Heart right ventricle (tissue), 16 donors: ENCODE measurements at regions of chr14 and their contacts with region 1.

Region 1: GRCh38 chr14:80047761-80048160 is 163.5 kb downstream of the DIO2 start:
- DNase-seq: no peak
- ATAC-seq: no peak
- H3K4me3 ChIP-seq: no peak overlapping the region
- H3K27ac ChIP-seq: no peak overlapping the region
- H3K4me1 ChIP-seq: no peaks in the 10 kb centered on the region
- H3K27me3 ChIP-seq: no peaks in the 10 kb centered on the region
- CTCF ChIP-seq: no peak

Region 2: DNA sequence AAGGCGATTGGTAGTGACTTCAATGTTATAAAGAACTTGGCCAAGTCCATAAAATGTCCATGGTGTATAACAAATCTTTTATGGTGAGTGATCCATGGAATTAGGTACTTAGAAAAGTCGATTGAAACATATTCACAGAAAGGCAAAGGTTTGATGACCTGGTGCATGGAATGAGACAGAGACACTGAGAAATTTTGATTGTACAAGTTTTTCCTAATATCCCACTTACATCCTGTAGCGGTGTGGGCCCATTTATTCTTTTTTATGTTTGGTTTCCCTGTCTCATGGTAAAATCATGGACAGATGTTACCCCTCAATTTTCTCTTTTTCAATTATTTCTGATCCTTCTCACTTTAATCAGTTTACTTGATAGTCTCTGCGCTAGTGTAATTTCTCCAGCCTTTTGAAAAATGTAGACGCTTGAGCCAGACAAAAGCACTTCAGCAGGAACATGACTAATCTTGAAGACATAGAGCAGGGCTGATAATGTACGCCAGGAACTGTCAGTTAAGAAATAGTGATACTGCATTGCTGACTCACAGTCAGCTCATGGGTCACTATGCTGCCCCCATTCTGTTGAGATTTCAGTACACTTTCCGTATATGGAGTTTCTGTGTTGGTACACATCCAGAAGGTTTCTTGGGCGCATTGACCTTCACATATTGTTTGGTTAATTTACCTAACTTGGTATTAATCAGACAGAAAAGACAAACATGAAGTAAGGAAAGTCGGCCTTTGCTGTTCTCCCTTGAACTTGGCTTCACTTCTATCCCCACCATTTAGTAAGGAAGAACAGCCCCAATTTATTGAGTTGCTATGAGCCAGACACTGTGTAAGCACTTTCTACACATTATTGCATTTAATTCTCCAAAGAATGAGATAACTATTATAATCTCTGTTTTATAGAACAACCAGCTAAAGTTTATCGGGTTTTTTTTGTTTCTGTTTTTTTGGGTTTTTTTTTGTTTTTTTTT is 678.1 kb before region 1 on chr14:
- intact Hi-C with region 1: loop called in 1 of 10 experiments (anchors 10 kb)
- DNase-seq: no peak
- ATAC-seq: peak in 1 of 8 donors; percentile 55
- H3K4me3 ChIP-seq: no peak overlapping the region
- H3K27ac ChIP-seq: no peak overlapping the region
- H3K4me1 ChIP-seq: no peaks in the 10 kb centered on the region
- H3K27me3 ChIP-seq: no peaks in the 10 kb centered on the region
- CTCF ChIP-seq: no peak